K562 (cell line): ENCODE measurements at regions of chr10 and their contacts with region 1.

Region 1: DNA sequence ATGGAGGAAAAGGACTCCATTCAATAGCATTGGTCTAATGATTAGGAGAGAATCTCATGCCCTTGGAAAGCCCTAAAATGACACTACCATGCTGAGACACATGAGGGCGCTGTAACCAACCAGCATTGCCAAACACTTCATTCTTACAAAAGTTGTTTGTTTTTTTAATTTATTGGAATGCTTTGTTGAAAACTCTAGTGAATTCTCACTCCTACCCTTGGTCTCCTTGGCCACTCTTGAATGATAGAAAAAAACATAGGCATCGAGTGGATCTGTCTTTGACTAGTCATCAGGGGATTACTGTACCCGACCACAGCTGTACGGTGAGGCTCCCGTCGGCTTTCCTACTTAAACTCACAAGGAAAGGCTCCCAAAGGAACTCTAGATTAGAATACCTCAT is 29.3 kb upstream of the ADD3 start:
- DNase-seq: peak; percentile 44 to 74 (median 46)
- ATAC-seq: peak; percentile 68
- H3K4me3 ChIP-seq: no peak overlapping the region
- H3K27ac ChIP-seq: peak overlapping the region; percentile 55; the same call in 2 of the 3 replicates
- H3K4me1 ChIP-seq: peaks cover 8 to 21% of the 10 kb centered on the region in 2 experiments; a peak in 4 of 5 replicates
- H3K27me3 ChIP-seq: no peaks in the 10 kb centered on the region
- CTCF ChIP-seq: peak; percentile 63 to 81 (median 77)
- EP300 ChIP-seq: no peak
- POLR2A ChIP-seq: no peak
- RAD21 ChIP-seq: peak; percentile 50 to 74; a peak in 3 of 4 replicates

Region 2: DNA sequence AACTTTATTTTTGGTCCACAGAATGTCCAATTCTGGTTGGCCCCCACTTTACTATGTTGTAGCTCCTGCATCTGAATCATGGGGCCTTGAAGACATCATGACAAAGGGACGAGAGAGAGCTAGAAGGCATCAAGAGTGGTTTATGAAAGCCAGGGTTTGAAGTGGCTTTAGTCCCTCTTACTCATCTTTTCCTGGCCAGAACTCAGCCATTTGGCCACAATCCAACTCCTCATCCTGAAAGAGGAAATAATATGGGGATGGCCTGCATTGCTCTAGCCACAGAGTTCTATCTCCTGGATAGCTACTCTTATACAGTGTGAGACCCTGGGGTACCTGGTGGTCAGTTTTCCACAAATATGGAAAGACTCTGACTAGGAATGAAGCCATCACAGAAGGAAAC is 474.1 kb before region 1 on chr10:
- CTCF ChIA-PET with region 1: no interaction called
- POLR2A ChIA-PET with region 1: no interaction called
- in situ Hi-C with region 1: no loop called
- intact Hi-C with region 1: no loop called
- DNase-seq: no peak
- ATAC-seq: no peak
- H3K4me3 ChIP-seq: no peak overlapping the region
- H3K27ac ChIP-seq: no peak overlapping the region
- H3K4me1 ChIP-seq: no peaks in the 10 kb centered on the region
- H3K27me3 ChIP-seq: no peaks in the 10 kb centered on the region
- CTCF ChIP-seq: no peak
- EP300 ChIP-seq: no peak
- POLR2A ChIP-seq: no peak
- RAD21 ChIP-seq: no peak

Region 3: GRCh38 chr10:110007701-110008517 is 29.4 kb after region 1 on chr10 and contains the start of gene ADD3:
- CTCF ChIA-PET with region 1: no interaction called
- POLR2A ChIA-PET with region 1: interaction called, 10 read pairs
- in situ Hi-C with region 1: no loop called
- intact Hi-C with region 1: loop called (anchors 2 kb)
- DNase-seq: peak; percentile 94 to 97 (median 96)
- ATAC-seq: peak; percentile 82
- H3K4me3 ChIP-seq: peak within 1 kb of the TSS; percentile 92
- H3K27ac ChIP-seq: peak within 1 kb of the TSS; percentile 92
- H3K4me1 ChIP-seq: peaks cover 15 to 32% of the 10 kb centered on the region in 2 experiments
- H3K27me3 ChIP-seq: no peaks in the 10 kb centered on the region
- CTCF ChIP-seq: no peak
- EP300 ChIP-seq: no peak
- POLR2A ChIP-seq: peak; percentile 66; the same call in 1 of the 2 replicates
- RAD21 ChIP-seq: no peak
- polyA plus RNA-seq, gene ADD3: 13.2 to 15.1 TPM

Region 4: GRCh38 chr10:110016039-110016438 is 37.6 kb after region 1 on chr10:
- CTCF ChIA-PET with region 1: no interaction called
- POLR2A ChIA-PET with region 1: no interaction called
- in situ Hi-C with region 1: no loop called
- intact Hi-C with region 1: loop called (anchors 2 kb)
- DNase-seq: no peak
- ATAC-seq: peak; percentile 71
- H3K4me3 ChIP-seq: no peak overlapping the region
- H3K27ac ChIP-seq: no peak overlapping the region
- H3K4me1 ChIP-seq: peaks cover 3 to 6% of the 10 kb centered on the region in 2 experiments; a peak in 4 of 5 replicates
- H3K27me3 ChIP-seq: no peaks in the 10 kb centered on the region
- CTCF ChIP-seq: peak; percentile 24 to 53 (median 37); a peak in 4 of 6 replicates
- EP300 ChIP-seq: no peak
- POLR2A ChIP-seq: no peak
- RAD21 ChIP-seq: peak; percentile 23 to 68; a peak in 3 of 4 replicates

Region 5: GRCh38 chr10:110081911-110082310 is 103.4 kb after region 1 on chr10:
- CTCF ChIA-PET with region 1: no interaction called
- POLR2A ChIA-PET with region 1: no interaction called
- in situ Hi-C with region 1: no loop called
- intact Hi-C with region 1: loop called (anchors 5 kb)
- DNase-seq: peak in 2 of 4 experiments; percentile 30 to 61
- ATAC-seq: peak; percentile 55
- H3K4me3 ChIP-seq: no peak overlapping the region
- H3K27ac ChIP-seq: peak overlapping the region; percentile 91
- H3K4me1 ChIP-seq: peaks cover 11 to 47% of the 10 kb centered on the region in 2 experiments; a peak in 4 of 5 replicates
- H3K27me3 ChIP-seq: no peaks in the 10 kb centered on the region
- CTCF ChIP-seq: no peak
- EP300 ChIP-seq: no peak
- POLR2A ChIP-seq: no peak
- RAD21 ChIP-seq: no peak

Region 6: DNA sequence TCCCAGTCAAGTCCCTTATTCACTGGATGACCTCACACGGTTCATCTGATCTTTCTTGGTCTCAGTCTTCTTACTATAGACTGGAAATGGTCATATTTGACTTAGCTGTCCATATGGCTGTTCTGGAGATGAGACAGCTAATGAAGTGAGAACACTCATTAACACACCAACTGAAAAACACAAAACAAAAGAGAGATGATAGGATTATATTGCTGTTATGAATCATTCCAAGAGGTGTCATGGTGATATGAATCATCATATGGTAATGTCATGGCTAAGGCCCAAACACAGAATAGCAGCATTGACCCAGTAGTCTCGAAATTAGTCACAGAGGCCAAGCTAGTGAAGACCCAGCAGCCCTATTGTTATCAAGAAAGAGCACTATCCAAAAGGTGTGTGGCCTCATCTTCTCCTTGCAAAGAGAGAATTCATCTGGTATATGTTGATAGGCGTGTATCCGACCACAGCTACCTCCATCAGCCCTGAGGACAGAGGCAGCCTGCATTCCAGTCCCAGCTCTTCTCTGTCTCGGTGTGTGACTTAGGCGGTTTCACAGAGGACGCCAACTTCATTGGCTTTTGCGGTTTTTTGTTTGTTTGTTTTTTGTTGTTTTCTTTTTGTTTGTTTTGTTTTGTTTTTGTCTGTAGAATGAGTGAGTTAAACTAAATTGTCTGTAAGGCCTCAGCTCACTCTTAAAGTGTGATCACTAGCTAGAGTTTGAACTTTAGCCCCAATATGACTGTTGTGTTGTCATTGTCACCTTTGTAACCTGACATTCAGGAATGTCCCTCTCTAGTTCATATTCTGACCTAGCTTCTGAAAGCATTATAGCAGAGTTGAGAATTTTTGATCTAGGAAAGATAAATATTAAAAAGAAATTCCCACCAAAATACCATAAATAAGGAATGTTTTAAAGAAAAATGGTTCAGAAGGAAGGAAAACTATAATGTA is 795.9 kb after region 1 on chr10:
- CTCF ChIA-PET with region 1: no interaction called
- POLR2A ChIA-PET with region 1: no interaction called
- in situ Hi-C with region 1: no loop called
- intact Hi-C with region 1: no loop called
- DNase-seq: peak; percentile 78 to 87 (median 84)
- ATAC-seq: peak; percentile 89
- H3K4me3 ChIP-seq: no peak overlapping the region
- H3K27ac ChIP-seq: peak overlapping the region; percentile 93
- H3K4me1 ChIP-seq: peaks cover 9 to 53% of the 10 kb centered on the region in 2 experiments; a peak in 4 of 5 replicates
- H3K27me3 ChIP-seq: no peaks in the 10 kb centered on the region
- CTCF ChIP-seq: no peak
- EP300 ChIP-seq: peak; percentile 76; the same call in 1 of the 2 replicates
- POLR2A ChIP-seq: no peak
- RAD21 ChIP-seq: no peak